CD4-positive, alpha-beta T cell (primary cell): ENCODE measurements at regions of chr7 and their contacts with region 1.

Region 1: GRCh38 chr7:150514748-150515222 is at the start of gene GIMAP7:
- DNase-seq: peak; percentile 59 to 85 (median 70)
- ATAC-seq: peak; percentile 82
- H3K4me3 ChIP-seq: peak within 1 kb of the TSS; percentile 79
- H3K4me3 Mint-ChIP-seq: peak within 1 kb of the TSS; percentile 100
- H3K27ac ChIP-seq: peak within 1 kb of the TSS; percentile 63 to 84
- H3K27ac Mint-ChIP-seq: peak within 1 kb of the TSS; percentile 93
- H3K4me1 ChIP-seq: peaks cover 42% of the 10 kb centered on the region
- H3K4me1 Mint-ChIP-seq: peaks cover 51% of the 10 kb centered on the region
- H3K27me3 ChIP-seq: no peaks in the 10 kb centered on the region
- H3K27me3 Mint-ChIP-seq: no peaks in the 10 kb centered on the region
- CTCF ChIP-seq: no peak
- total RNA-seq, gene GIMAP7: 48.4 to 50.7 TPM

Region 2: DNA sequence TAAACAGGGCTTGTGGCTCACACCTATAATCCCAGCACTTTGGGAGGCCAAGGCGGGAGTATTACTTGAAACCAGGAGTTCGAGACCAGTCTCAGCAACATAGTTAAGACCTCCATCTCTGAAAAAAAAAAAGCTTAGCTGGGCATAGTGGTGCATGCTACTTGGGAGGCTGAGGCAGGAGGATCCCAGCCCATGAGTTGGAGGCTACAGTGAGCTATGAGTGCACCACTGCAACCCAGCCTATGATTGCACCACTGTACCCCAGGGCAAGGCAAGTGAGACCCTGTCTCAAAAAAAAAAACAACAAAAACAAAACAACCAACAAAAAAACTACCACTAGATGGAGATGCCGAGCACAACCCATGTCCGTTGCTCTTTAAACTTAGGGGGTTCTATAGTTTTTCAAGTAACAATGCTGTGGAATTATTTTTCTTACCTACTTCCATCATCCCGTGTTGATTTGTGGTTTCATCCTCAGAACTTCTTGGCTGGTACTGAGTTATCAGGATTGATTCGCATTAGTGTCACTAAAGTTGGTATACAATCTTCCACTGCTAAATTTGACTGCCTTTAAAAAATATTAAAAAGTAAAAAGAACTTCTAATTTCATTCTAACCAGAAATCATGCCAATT is 158.4 kb before region 1 on chr7:
- CTCF ChIA-PET with region 1: no interaction called
- POLR2A ChIA-PET with region 1: no interaction called
- intact Hi-C with region 1: loop called in 1 of 2 experiments (anchors 5 kb)
- DNase-seq: peak in 4 of 14 experiments; percentile 46 to 78 (median 68)
- ATAC-seq: no peak
- H3K4me3 ChIP-seq: no peak overlapping the region
- H3K4me3 Mint-ChIP-seq: peak overlapping the region; percentile 25
- H3K27ac ChIP-seq: no peak overlapping the region
- H3K27ac Mint-ChIP-seq: peak overlapping the region; percentile 34
- H3K4me1 ChIP-seq: peaks cover 28% of the 10 kb centered on the region
- H3K4me1 Mint-ChIP-seq: peaks cover 37% of the 10 kb centered on the region
- H3K27me3 ChIP-seq: no peaks in the 10 kb centered on the region
- H3K27me3 Mint-ChIP-seq: no peaks in the 10 kb centered on the region
- CTCF ChIP-seq: peak; percentile 75

Region 3: DNA sequence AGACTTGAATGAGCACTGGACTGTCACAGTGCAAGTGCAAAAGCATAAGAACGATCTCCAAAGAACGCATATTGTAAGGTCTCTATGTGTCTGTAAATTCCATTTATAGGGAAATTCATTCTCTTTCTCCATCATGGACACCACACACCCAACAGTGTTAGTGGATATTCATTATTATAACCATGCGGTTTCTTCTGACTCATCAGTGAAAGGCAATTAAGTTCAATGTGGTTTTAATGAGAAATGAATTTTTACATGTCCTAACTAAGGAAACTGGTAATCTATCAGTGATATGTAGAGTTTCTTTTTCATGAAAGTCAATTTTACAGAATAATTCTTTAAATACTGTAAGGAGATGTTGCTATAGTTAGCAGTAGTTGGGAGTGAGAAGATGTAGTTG is 38.5 kb before region 1 on chr7:
- CTCF ChIA-PET with region 1: interaction called, 9 read pairs
- POLR2A ChIA-PET with region 1: interaction called, 312 read pairs
- intact Hi-C with region 1: loop called (anchors 1 to 2 kb)
- DNase-seq: no peak
- ATAC-seq: no peak
- H3K4me3 ChIP-seq: no peak overlapping the region
- H3K4me3 Mint-ChIP-seq: peak overlapping the region; percentile 25
- H3K27ac ChIP-seq: peak overlapping the region; percentile 92 to 95
- H3K27ac Mint-ChIP-seq: peak overlapping the region; percentile 97
- H3K4me1 ChIP-seq: peaks cover 72% of the 10 kb centered on the region
- H3K4me1 Mint-ChIP-seq: peaks cover 92% of the 10 kb centered on the region
- H3K27me3 ChIP-seq: no peaks in the 10 kb centered on the region
- H3K27me3 Mint-ChIP-seq: no peaks in the 10 kb centered on the region
- CTCF ChIP-seq: no peak

Region 4: DNA sequence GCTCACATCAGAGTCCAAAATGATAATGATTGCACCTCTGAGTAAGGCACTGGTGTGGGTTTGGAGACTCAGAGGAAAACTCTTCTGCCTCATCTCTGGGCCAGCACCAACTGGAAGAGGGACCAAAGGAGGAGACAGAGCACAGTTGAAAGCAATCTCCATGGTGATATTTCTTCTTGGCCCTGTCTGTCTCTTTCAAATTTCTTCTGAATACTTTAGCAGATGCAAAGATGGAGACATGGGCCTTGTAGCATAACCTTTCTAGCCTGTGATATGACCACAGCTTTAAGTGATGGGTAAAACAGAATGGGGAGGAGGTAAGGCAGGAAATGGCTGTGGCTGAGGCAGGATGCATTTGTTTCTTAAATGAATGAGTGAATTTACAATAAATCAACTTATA is 12.3 kb before region 1 on chr7:
- CTCF ChIA-PET with region 1: interaction called, 5 read pairs
- POLR2A ChIA-PET with region 1: interaction called, 102 read pairs
- intact Hi-C with region 1: loop called in 1 of 2 experiments (anchors 2 kb)
- DNase-seq: peak in 6 of 14 experiments; percentile 38 to 85 (median 64)
- ATAC-seq: peak; percentile 83
- H3K4me3 ChIP-seq: no peak overlapping the region
- H3K4me3 Mint-ChIP-seq: peak overlapping the region; percentile 50
- H3K27ac ChIP-seq: peak overlapping the region; percentile 66 to 69
- H3K27ac Mint-ChIP-seq: peak overlapping the region; percentile 88
- H3K4me1 ChIP-seq: peaks cover 44% of the 10 kb centered on the region
- H3K4me1 Mint-ChIP-seq: peaks cover 89% of the 10 kb centered on the region
- H3K27me3 ChIP-seq: no peaks in the 10 kb centered on the region
- H3K27me3 Mint-ChIP-seq: no peaks in the 10 kb centered on the region
- CTCF ChIP-seq: no peak

Region 5: DNA sequence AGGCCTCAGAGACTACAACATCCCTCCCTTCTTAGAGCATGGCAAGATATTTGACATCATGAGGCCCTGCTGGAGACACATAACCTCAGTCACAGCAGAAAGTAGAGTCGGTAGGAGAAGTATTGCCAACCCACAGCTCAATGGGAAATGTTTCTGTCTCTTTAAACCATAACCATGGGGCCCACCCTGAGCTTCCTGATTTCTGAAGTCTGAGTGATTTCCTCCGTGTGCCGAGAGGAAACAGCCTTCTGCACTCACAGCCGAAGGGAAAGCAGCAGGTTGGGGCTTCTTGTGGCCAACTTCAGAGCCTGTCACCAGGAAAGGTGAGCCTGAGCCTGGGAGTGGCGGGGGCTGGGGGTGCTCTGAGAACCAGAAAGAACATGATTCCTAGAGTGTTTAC is 201.6 kb after region 1 on chr7 and contains the start of gene GIMAP1:
- CTCF ChIA-PET with region 1: no interaction called
- POLR2A ChIA-PET with region 1: interaction called, 33 read pairs
- intact Hi-C with region 1: no loop called
- DNase-seq: peak; percentile 35 to 85 (median 72)
- ATAC-seq: peak; percentile 88
- H3K4me3 ChIP-seq: peak within 1 kb of the TSS; percentile 79
- H3K4me3 Mint-ChIP-seq: peak within 1 kb of the TSS; percentile 100
- H3K27ac ChIP-seq: peak within 1 kb of the TSS; percentile 81 to 83
- H3K27ac Mint-ChIP-seq: peak within 1 kb of the TSS; percentile 87
- H3K4me1 ChIP-seq: peaks cover 51% of the 10 kb centered on the region
- H3K4me1 Mint-ChIP-seq: peaks cover 78% of the 10 kb centered on the region
- H3K27me3 ChIP-seq: no peaks in the 10 kb centered on the region
- H3K27me3 Mint-ChIP-seq: no peaks in the 10 kb centered on the region
- CTCF ChIP-seq: no peak
- total RNA-seq, gene GIMAP1: 8.0 to 8.1 TPM

Region 6: DNA sequence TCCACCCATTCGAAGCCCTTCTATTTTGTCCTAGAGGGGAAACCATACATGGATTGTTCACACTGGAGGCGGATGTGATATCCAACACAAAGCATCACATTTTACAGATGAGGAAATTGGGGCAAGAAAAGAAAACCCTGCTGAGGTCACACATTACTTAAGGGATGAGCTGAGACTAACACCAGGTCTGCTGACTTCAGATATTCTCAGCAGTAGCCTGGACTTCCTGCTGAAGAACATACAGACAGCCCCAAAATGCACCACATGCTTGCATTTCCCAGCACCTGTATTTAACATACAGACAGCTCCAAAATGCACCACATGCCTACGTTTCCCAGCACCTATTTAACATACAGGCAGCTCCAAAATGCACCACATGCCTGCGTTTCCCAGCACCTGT is 233.6 kb after region 1 on chr7:
- CTCF ChIA-PET with region 1: no interaction called
- POLR2A ChIA-PET with region 1: interaction called, 39 read pairs
- intact Hi-C with region 1: no loop called
- DNase-seq: peak in 3 of 14 experiments; percentile 54 to 58 (median 57)
- ATAC-seq: peak; percentile 61
- H3K4me3 ChIP-seq: peak overlapping the region; percentile 31
- H3K4me3 Mint-ChIP-seq: peak overlapping the region; percentile 40
- H3K27ac ChIP-seq: peak overlapping the region; percentile 65 to 69
- H3K27ac Mint-ChIP-seq: peak overlapping the region; percentile 87
- H3K4me1 ChIP-seq: peaks cover 93% of the 10 kb centered on the region
- H3K4me1 Mint-ChIP-seq: peaks cover 94% of the 10 kb centered on the region
- H3K27me3 ChIP-seq: no peaks in the 10 kb centered on the region
- H3K27me3 Mint-ChIP-seq: no peaks in the 10 kb centered on the region
- CTCF ChIP-seq: no peak

Region 7: DNA sequence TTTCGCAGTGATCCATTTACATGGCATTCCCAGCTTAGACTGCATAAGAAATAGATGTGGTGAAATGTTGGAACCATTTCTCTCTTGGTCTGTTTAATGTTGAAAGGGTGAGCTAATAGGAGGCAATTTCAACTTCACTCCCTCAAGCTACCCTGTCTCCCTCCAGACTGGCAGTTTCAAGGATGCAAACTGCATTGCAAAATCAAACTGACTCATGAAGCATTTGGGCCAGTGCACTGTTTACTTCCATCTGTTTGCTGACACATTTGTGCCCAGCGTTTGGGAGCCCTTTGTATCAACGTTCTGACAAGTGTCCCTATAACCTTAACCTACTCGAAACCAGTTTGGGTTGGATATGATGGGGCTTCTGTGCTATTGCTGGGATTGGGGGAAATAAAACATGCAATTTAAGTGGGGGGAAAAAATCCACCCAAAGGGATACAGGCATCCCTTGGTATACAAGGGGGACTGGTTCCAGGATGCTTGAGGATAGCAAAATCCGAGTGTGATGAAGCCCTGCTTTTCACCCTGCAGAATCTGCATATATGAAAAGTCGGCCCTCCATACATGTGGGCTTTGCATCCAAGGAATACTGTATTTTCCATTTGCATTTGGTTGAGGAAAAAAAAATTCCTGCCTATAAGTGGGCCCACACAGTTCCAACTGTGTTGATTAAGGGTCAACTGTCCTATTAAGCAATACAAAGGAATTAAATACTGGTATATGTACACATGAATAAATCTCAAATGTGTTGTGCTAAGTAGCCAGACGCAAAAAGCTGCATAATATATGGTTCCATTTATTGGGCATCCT is 989.3 kb after region 1 on chr7:
- CTCF ChIA-PET with region 1: no interaction called
- POLR2A ChIA-PET with region 1: no interaction called
- intact Hi-C with region 1: no loop called
- DNase-seq: peak in 2 of 14 experiments; percentile 27 to 34
- ATAC-seq: no peak
- H3K4me3 ChIP-seq: no peak overlapping the region
- H3K4me3 Mint-ChIP-seq: no peak overlapping the region
- H3K27ac ChIP-seq: no peak overlapping the region
- H3K27ac Mint-ChIP-seq: no peak overlapping the region
- H3K4me1 ChIP-seq: peaks cover 30% of the 10 kb centered on the region
- H3K4me1 Mint-ChIP-seq: peaks cover 83% of the 10 kb centered on the region
- H3K27me3 ChIP-seq: no peaks in the 10 kb centered on the region
- H3K27me3 Mint-ChIP-seq: no peaks in the 10 kb centered on the region
- CTCF ChIP-seq: no peak